Naive thymus-derived CD4-positive, alpha-beta T cell (primary cell): ENCODE measurements at regions of chr14 and their contacts with region 1.

Region 1: GRCh38 chr14:64937821-64938193 is 4.7 kb downstream of the GPX2 start:
- DNase-seq: no peak
- ATAC-seq: no peak
- H3K4me3 ChIP-seq: no peak overlapping the region
- H3K4me3 Mint-ChIP-seq: peak overlapping the region in 1 of 10 donors; percentile 34
- H3K27ac ChIP-seq: no peak overlapping the region
- H3K27ac Mint-ChIP-seq: peak overlapping the region in 7 of 9 donors; percentile 25 to 84 (median 69)
- H3K4me1 ChIP-seq: no peaks in the 10 kb centered on the region
- H3K4me1 Mint-ChIP-seq: peaks cover 37 to 92% (median 83%) of the 10 kb centered on the region in 7 donors
- H3K27me3 ChIP-seq: no peaks in the 10 kb centered on the region
- H3K27me3 Mint-ChIP-seq: no peaks in the 10 kb centered on the region

Region 2: DNA sequence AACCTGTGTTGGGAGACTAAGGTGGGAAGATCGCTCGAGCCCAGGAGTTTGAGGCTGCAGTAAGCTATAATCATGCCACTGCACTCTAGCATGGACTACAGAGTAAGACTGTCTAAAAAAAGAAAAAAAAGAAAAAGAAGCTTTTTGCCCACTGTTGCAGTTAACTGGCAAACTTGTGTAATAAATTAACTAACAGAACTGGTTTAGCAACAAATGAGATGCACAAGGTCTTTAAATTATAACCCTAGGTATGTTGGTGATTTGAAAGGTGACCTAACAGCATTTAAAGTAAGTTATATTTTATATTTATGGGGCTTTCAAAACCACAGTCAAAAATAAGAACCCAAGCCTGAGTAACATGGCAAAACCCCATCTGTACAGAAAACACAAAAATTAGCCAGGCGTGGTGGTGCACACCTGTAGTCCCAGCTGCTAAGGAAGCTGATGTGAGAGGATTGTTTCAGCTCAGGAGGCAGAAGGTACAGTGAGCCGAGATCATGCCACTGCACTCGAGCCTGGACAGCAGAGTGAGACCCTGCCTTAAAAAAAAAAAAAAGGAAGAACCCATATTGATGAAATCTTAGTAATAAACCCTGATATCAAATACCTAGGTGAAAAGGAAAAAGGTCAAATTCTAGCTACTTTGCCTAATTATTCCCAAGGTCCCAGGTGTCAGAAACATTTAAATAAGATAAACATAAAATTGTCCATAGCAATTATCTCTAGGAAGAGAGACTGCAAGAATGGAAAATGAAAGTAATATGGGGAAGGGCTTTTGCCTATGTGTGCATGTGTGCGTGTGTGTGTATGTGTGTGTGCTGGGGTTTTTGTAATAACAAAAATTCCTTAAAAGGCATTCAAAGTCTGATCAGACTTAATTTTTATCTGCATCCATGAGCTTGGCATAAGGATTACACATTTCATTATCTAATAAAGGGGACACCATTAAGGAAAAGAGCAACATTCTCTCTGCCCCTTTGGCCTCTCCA is 1069.6 kb before region 1 on chr14:
- CTCF ChIA-PET with region 1: no interaction called
- POLR2A ChIA-PET with region 1: no interaction called
- intact Hi-C with region 1: no loop called
- DNase-seq: peak in 6 of 9 donors; percentile 15 to 44 (median 28)
- ATAC-seq: no peak
- H3K4me3 ChIP-seq: no peak overlapping the region
- H3K4me3 Mint-ChIP-seq: peak overlapping the region; percentile 46 to 84 (median 75)
- H3K27ac ChIP-seq: peak overlapping the region; percentile 36
- H3K27ac Mint-ChIP-seq: peak overlapping the region; percentile 84 to 98 (median 92)
- H3K4me1 ChIP-seq: peaks cover 36 to 60% of the 10 kb centered on the region in 2 donors
- H3K4me1 Mint-ChIP-seq: peaks cover 37 to 78% (median 64%) of the 10 kb centered on the region in 7 donors
- H3K27me3 ChIP-seq: no peaks in the 10 kb centered on the region
- H3K27me3 Mint-ChIP-seq: no peaks in the 10 kb centered on the region

Region 3: DNA sequence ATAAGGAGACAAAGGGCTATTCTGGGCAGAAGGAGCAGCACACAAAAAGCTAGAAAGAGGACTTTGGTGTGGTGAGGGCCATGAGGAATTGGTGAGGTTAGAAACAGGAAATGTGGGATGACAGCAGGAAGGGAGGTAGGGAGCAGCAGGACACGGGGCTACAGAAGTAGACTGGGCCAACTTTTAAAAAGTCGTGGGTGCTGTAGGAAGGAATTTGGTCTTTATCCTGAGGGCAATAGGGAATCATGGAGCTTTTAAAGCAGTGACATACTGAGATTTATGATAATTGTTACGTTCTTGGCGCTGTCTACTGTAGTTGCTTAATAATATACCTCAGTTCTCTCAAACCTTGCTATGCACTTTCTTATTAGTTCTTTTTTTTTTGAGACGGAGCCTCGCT is 31.8 kb before region 1 on chr14:
- CTCF ChIA-PET with region 1: no interaction called
- POLR2A ChIA-PET with region 1: interaction called, 4 read pairs
- intact Hi-C with region 1: loop called in 1 of 2 experiments (anchors 5 kb)
- DNase-seq: no peak
- ATAC-seq: no peak
- H3K4me3 ChIP-seq: no peak overlapping the region
- H3K4me3 Mint-ChIP-seq: no peak overlapping the region
- H3K27ac ChIP-seq: no peak overlapping the region
- H3K27ac Mint-ChIP-seq: no peak overlapping the region
- H3K4me1 ChIP-seq: no peaks in the 10 kb centered on the region
- H3K4me1 Mint-ChIP-seq: peaks cover 0 to 4% (median 0%) of the 10 kb centered on the region in 7 donors
- H3K27me3 ChIP-seq: no peaks in the 10 kb centered on the region
- H3K27me3 Mint-ChIP-seq: peaks cover 0 to 50% (median 5%) of the 10 kb centered on the region in 5 donors

Region 4: GRCh38 chr14:64955297-64955696 is 17.5 kb after region 1 on chr14:
- CTCF ChIA-PET with region 1: no interaction called
- POLR2A ChIA-PET with region 1: interaction called, 7 read pairs
- intact Hi-C with region 1: loop called in 1 of 2 experiments (anchors 2 kb)
- DNase-seq: no peak
- ATAC-seq: no peak
- H3K4me3 ChIP-seq: no peak overlapping the region
- H3K4me3 Mint-ChIP-seq: no peak overlapping the region
- H3K27ac ChIP-seq: no peak overlapping the region
- H3K27ac Mint-ChIP-seq: peak overlapping the region in 2 of 9 donors; percentile 8 to 46
- H3K4me1 ChIP-seq: no peaks in the 10 kb centered on the region
- H3K4me1 Mint-ChIP-seq: peaks cover 12 to 30% (median 18%) of the 10 kb centered on the region in 7 donors
- H3K27me3 ChIP-seq: no peaks in the 10 kb centered on the region
- H3K27me3 Mint-ChIP-seq: no peaks in the 10 kb centered on the region